Prostate gland (tissue), 2 donors: ENCODE measurements at regions of chr16 and their contacts with region 1.

Region 1: GRCh38 chr16:67464565-67464964 is 16.4 kb downstream of the ATP6V0D1 start:
- DNase-seq: no peak
- H3K4me3 ChIP-seq: no peak overlapping the region
- H3K27ac ChIP-seq: peak overlapping the region in 1 of 2 donors; percentile 92
- H3K4me1 ChIP-seq: peaks cover 31% of the 10 kb centered on the region
- H3K27me3 ChIP-seq: no peaks in the 10 kb centered on the region
- CTCF ChIP-seq: no peak
- POLR2A ChIP-seq: no peak

Region 2: DNA sequence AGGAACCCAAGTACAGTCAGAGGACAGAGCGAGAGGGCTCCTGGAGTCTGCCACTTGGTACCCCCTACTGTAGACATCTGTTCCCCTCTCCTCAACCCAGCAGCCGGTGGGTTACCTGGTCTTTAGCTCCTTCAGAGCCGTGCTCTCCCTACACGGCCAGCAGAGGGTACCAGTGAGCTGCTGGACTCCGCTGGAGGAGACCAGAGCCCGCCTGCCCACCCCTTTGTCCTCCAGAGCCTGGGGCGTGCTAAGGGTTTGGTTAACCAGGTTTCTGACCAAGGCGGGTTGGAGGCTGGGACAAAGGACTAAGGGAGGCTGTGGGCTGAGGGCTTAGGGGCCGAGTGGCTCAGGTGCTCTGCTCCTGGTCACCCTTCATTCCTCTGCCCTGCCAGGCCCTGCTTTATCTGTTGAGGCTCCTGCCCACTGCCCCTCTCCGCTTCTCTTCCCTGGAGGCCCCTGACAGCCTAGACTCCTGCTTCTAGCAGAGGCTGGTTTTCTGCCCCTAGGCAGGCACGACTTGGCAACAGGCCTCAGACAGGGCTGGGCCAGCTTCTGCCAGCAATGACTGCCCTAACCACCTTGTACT is 36.3 kb before region 1 on chr16:
- intact Hi-C with region 1: loop called (anchors 2 kb)
- DNase-seq: peak; percentile 76
- H3K4me3 ChIP-seq: no peak overlapping the region
- H3K27ac ChIP-seq: peak overlapping the region; percentile 45 to 49
- H3K4me1 ChIP-seq: peaks cover 13% of the 10 kb centered on the region
- H3K27me3 ChIP-seq: no peaks in the 10 kb centered on the region
- CTCF ChIP-seq: peak; percentile 69 to 97 (median 94)
- POLR2A ChIP-seq: peak; percentile 17

Region 3: DNA sequence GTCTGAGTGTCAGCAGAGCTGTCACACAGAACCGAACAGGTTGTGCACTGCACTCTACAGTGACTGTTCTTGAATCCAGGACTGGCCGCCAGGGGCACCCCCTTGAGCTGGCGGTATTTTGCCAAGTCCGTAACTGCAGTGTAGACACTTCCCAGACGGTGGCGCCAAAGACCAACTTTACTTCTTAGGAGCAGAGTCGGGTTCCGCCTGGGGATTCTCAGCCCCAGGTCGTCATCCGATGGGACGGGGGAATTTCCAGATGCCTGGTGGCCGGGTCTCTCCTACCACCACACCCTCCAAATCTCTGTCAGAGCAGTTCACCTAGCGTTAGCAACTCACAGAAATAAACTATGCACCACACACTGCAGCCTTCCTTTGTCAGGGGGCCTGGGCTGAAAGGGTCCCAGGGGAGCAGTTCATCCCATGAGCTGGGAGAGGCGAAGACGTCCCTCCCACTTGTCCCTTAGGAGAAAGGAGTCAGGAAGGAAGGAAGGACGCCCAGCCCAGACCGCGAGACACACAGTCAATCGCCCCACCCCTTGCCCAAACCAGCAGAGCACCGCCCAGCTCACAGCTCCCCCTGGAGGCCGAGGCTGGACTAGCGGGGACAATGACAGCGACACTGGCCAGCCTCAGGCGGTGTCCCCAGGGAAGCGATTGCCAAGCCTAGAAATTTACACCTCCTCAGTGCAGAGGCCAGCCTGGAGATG is 56.7 kb after region 1 on chr16:
- intact Hi-C with region 1: no loop called
- DNase-seq: peak; percentile 96
- H3K4me3 ChIP-seq: peak overlapping the region; percentile 29 to 34
- H3K27ac ChIP-seq: peak overlapping the region; percentile 92 to 96
- H3K4me1 ChIP-seq: no peaks in the 10 kb centered on the region
- H3K27me3 ChIP-seq: no peaks in the 10 kb centered on the region
- CTCF ChIP-seq: peak; percentile 71 to 97 (median 90)
- POLR2A ChIP-seq: peak; percentile 63